B cell (primary cell): ENCODE measurements at regions of chr3 and their contacts with region 1.

Region 1: DNA sequence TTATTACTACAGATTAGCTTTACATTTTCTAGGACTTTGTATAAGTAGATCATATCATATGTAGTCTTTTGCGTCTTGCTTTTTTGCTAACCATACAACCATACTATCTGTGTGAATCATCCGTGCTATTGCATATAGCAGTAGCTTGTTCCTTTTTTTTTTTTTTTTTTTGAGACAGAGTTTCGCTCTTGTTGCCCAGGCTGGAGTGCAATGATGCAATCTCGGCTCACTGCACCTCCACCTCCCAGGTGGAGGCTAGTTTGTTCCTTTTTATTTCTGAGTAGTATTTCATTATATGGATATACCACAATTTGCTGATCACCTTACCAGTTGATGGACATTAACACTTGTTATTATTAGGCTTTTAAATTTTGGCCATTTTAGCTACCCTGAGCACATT is 54.5 kb upstream of the TBL1XR1 start:
- DNase-seq: peak; percentile 52
- ATAC-seq: peak; percentile 58
- H3K4me3 ChIP-seq: no peak overlapping the region
- H3K4me3 Mint-ChIP-seq: no peak overlapping the region
- H3K27ac ChIP-seq: no peak overlapping the region
- H3K27ac Mint-ChIP-seq: no peak overlapping the region
- H3K4me1 ChIP-seq: peaks cover 11 to 19% of the 10 kb centered on the region in 2 donors
- H3K4me1 Mint-ChIP-seq: peaks cover 28% of the 10 kb centered on the region
- H3K27me3 ChIP-seq: no peaks in the 10 kb centered on the region
- H3K27me3 Mint-ChIP-seq: no peaks in the 10 kb centered on the region
- CTCF ChIP-seq: no peak

Region 2: GRCh38 chr3:177320765-177321247 is 69.1 kb after region 1 on chr3:
- CTCF ChIA-PET with region 1: no interaction called
- POLR2A ChIA-PET with region 1: no interaction called
- intact Hi-C with region 1: loop called (anchors 5 kb)
- DNase-seq: peak; percentile 48
- ATAC-seq: peak; percentile 32
- H3K4me3 ChIP-seq: peak overlapping the region in 1 of 5 experiments; percentile 31
- H3K4me3 Mint-ChIP-seq: peak overlapping the region; percentile 72
- H3K27ac ChIP-seq: peak overlapping the region; percentile 5 to 61
- H3K27ac Mint-ChIP-seq: peak overlapping the region; percentile 83
- H3K4me1 ChIP-seq: peaks cover 78 to 81% of the 10 kb centered on the region in 2 donors
- H3K4me1 Mint-ChIP-seq: peaks cover 69% of the 10 kb centered on the region
- H3K27me3 ChIP-seq: no peaks in the 10 kb centered on the region
- H3K27me3 Mint-ChIP-seq: no peaks in the 10 kb centered on the region
- CTCF ChIP-seq: no peak